ENCODE measurements at regions of chr22 and their contacts with region 1.

Region 1: DNA sequence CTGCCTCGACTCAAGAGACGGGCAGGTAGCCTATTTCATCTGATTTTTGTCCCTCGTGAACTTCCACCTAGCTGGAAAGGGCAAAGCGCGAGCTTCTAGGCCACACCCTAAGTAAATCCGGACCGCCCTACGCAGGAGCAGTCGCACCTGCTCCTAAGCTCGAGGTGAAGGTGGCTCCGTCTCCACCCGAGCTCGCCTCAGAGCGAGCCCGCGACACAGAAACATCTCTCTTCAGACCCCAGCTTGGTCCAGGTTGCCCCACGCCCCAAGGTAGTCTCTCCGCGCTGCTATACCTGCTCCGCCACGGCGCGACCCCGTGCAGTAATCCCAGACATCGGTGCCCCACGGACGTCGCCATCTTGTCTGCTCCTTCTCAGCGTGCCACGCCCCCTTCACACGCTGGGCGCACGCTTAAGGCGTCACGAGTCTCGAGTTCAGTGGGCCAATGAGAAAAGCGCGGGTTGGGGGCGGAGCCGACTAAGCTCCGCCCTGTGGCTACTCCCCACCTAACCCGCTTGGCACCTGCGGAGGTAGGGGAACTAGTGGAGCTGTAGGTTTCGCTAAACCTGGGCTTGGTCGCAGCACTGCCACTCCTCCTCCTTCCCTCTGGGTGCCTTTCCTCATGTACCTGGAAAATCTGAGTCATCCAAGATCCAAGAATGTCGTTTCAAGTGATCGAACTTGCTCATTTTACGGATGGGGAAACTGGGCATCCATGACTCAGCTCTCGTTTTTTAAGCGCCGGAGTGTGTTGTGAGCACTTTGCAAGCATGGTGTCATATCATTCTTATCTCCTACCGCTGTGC is at the start of gene PISD:
- DNase-seq: peak; percentile 92 to 99
- H3K4me3 ChIP-seq: peak within 1 kb of the TSS; percentile 51 to 97 (median 90)
- H3K27ac ChIP-seq: peak within 1 kb of the TSS; percentile 82
- H3K4me1 ChIP-seq: peaks cover 3 to 7% (median 7%) of the 10 kb centered on the region in 4 experiments; a peak in 5 of 7 replicates
- H3K27me3 ChIP-seq: no peaks in the 10 kb centered on the region
- CTCF ChIP-seq: no peak
- EP300 ChIP-seq: 0 out of 3 replicates have a peak, but pooled peaks of 1 of the 2 experiments have one; percentile 40
- POLR2A ChIP-seq: peak; percentile 73 to 92; a peak in 2 of 3 replicates
- RAD21 ChIP-seq: no peak
- total RNA-seq, gene PISD: 46.0 and 47.8 TPM in 2 replicates

Region 2: GRCh38 chr22:31230871-31231621 is 431.0 kb before region 1 on chr22:
- CTCF ChIA-PET with region 1: no interaction called
- POLR2A ChIA-PET with region 1: no interaction called
- DNase-seq: no peak
- H3K4me3 ChIP-seq: no peak overlapping the region
- H3K27ac ChIP-seq: no peak overlapping the region
- H3K4me1 ChIP-seq: peaks cover 0 to 5% (median 2%) of the 10 kb centered on the region in 4 experiments; a peak in 3 of 7 replicates
- H3K27me3 ChIP-seq: no peaks in the 10 kb centered on the region
- CTCF ChIP-seq: peak in 2 of 3 experiments; percentile 33 to 43; a peak in 3 of 4 replicates
- EP300 ChIP-seq: no peak
- POLR2A ChIP-seq: no peak
- RAD21 ChIP-seq: peak; percentile 54 to 62

Region 3: DNA sequence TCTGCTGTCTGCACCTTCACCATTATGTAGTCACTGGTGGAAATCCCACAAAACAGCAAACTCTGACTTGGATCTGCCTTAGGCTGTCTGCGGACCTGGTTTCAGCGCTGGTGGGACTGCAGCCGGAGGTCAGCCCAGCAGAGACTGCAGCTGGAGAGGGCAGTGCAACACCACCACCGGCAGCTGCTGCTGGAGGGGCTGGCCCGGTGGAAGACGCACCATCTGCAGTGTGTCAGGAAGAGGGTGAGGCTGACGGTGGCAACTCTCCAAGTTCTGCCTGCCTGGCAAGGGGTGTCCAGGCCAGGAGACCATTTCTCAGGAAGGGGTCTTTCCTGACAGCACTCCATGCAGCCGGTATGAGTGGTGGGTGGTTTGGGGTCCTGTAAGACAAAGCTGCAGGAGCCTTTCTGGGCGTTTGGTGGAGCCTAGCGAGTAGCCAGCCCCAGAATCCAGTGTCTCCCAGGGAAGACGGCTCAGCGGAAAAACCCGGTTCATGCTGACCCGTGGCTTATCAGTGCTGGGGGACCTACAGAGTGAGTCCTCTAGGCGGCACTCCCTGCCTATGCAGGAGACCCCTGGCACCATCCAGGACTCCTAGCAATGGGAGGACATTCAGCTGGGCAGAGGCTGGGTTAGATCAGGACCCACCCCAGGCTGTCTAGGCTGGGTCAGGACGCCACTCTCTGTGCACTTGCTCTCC is 50.8 kb before region 1 on chr22:
- CTCF ChIA-PET with region 1: no interaction called
- POLR2A ChIA-PET with region 1: no interaction called
- DNase-seq: no peak
- H3K4me3 ChIP-seq: no peak overlapping the region
- H3K27ac ChIP-seq: no peak overlapping the region
- H3K4me1 ChIP-seq: no peaks in the 10 kb centered on the region; a peak in 1 of 7 replicates
- H3K27me3 ChIP-seq: no peaks in the 10 kb centered on the region
- CTCF ChIP-seq: peak; percentile 6 to 19 (median 16); a peak in 2 of 4 replicates
- EP300 ChIP-seq: no peak
- POLR2A ChIP-seq: no peak
- RAD21 ChIP-seq: peak; percentile 42 to 54; a peak in 3 of 4 replicates

Region 4: DNA sequence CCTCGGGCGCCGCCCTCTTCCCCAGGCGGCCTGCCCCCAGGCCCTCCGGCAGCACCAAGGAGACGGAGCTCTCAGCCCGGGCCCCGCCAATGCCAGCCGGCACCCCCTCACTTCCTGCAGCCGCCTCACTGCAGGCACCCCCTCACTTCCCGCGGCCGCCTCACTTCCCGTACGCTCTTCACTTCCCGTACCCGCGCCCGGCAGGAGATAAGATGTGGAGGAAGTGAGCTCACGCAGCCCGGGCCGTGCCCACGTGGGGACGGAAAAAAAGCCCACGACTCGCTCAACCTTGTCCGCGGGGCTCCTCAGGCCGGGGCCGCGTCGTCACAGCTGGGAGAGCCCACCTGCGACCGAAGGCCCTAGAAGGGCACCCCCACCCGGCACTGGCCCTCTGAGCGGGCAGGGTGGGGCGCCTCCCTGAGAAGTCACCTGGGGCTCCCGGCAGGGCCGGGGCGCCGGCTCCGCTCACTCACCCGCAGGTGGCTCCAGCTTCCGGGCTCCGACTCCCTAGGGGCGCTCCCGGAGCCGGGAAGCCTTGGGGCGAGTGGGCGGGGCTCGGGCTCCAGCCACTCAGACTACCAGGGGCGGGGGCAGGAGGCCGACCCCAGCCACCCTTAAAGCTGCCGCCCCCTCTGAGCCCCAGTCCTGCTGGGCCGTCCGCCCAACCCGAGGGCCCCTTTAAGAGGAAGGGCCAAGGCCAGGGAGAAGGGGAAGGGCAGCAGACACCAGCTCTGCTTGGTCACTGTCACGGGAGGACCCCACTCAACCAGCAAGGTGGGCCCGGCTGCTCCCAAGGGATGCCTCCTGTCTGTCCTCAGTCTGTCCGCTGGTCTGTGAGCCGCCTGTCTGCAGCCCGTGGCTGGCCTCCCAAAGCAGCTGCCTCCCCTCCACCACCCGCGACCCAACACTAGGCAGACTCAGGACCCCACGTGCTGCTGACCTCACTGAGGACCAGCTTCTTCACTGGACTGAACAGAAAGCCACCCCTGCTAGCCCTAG is 31.4 kb before region 1 on chr22:
- CTCF ChIA-PET with region 1: interaction called, 5 read pairs
- POLR2A ChIA-PET with region 1: interaction called, 24 read pairs
- DNase-seq: peak; percentile 53 to 88
- H3K4me3 ChIP-seq: peak overlapping the region; percentile 58 to 97 (median 60)
- H3K27ac ChIP-seq: no peak overlapping the region
- H3K4me1 ChIP-seq: peaks cover 5 to 31% (median 23%) of the 10 kb centered on the region in 4 experiments
- H3K27me3 ChIP-seq: no peaks in the 10 kb centered on the region
- CTCF ChIP-seq: no peak
- EP300 ChIP-seq: no peak
- POLR2A ChIP-seq: no peak; a peak in 1 of 3 replicates
- RAD21 ChIP-seq: no peak

Region 5: DNA sequence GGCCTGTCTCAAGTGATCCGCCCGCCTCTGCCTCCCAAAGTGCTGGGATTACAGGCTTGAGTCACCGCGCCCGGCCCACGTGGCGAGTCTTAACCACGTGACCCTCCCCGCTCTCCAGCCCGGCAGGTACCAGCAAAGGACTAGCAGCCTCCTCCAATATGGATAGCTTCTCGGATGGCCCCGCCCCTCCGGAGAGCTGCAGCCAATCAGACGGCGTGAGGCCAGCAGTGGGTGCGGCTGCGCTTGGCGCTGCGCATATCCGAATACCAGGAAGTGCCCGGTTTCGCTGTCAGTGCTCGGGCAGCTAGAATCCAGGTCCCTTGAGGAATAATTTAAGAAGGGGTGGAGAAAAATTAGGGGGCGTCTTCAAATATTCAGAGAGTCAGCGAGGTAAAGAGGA is 14.6 kb after region 1 on chr22:
- CTCF ChIA-PET with region 1: interaction called, 19 read pairs
- POLR2A ChIA-PET with region 1: interaction called, 10 read pairs
- DNase-seq: peak; percentile 86 to 94
- H3K4me3 ChIP-seq: peak overlapping the region in 3 of 4 experiments; percentile 10 to 56 (median 30); a peak in 3 of 8 replicates
- H3K27ac ChIP-seq: no peak overlapping the region
- H3K4me1 ChIP-seq: peaks cover 0 to 2% (median 0%) of the 10 kb centered on the region in 4 experiments; a peak in 1 of 7 replicates
- H3K27me3 ChIP-seq: peaks cover 0 to 4% (median 3%) of the 10 kb centered on the region in 4 experiments; a peak in 3 of 7 replicates
- CTCF ChIP-seq: no peak
- EP300 ChIP-seq: no peak
- POLR2A ChIP-seq: no peak
- RAD21 ChIP-seq: no peak

Region 6: DNA sequence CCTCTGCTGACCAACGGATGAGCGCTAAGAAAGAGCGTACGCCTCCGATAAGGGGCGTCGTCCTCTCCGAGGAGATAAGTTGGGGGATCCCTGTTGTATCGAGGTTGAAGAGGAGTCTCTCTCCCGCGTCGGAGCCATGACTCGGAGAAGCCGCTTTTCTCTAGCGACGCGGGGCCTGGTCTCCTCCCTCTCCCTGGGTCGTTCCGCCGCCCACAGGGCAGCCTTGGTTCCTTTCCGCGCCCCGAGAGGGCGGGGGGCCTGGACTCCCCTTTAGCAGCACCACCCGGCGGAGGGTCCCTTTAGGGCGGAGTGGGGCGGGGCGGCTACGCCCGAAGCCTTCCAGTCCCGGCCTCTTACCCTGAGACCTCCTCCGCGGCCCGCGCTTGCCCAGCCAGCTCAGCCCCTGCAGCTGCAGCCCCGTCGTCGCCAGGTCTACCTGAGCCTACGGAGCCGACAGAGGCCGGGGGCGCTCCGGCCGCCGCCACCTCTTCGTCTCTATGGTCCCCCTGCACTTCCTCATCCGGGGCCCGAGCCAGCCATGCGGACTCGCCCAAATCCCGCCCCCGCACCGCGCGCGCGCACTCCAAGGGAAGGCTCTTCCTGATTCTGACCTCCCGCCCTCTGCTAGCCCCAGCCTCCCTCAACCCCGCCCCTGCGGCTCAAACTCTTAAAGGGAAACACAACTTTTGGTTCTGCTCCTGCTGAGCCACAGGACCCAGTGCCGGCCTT is 87.7 kb after region 1 on chr22 and contains the start of gene PRR14L:
- CTCF ChIA-PET with region 1: interaction called, 8 read pairs
- POLR2A ChIA-PET with region 1: interaction called, 11 read pairs
- DNase-seq: peak; percentile 87 to 100
- H3K4me3 ChIP-seq: peak within 1 kb of the TSS; percentile 85 to 98 (median 92)
- H3K27ac ChIP-seq: peak within 1 kb of the TSS; percentile 81
- H3K4me1 ChIP-seq: peaks cover 5 to 16% (median 12%) of the 10 kb centered on the region in 4 experiments
- H3K27me3 ChIP-seq: no peaks in the 10 kb centered on the region
- CTCF ChIP-seq: no peak
- EP300 ChIP-seq: peak in 1 of 2 experiments; percentile 99; a peak in 2 of 3 replicates
- POLR2A ChIP-seq: peak; percentile 85 to 92
- RAD21 ChIP-seq: no peak
- total RNA-seq, gene PRR14L: 98.6 and 110 TPM in 2 replicates

Measured in H1 (cell line).